Dorsolateral prefrontal cortex (tissue), 120 donors: ENCODE measurements at regions of chr2 and their contacts with region 1.

Region 1: DNA sequence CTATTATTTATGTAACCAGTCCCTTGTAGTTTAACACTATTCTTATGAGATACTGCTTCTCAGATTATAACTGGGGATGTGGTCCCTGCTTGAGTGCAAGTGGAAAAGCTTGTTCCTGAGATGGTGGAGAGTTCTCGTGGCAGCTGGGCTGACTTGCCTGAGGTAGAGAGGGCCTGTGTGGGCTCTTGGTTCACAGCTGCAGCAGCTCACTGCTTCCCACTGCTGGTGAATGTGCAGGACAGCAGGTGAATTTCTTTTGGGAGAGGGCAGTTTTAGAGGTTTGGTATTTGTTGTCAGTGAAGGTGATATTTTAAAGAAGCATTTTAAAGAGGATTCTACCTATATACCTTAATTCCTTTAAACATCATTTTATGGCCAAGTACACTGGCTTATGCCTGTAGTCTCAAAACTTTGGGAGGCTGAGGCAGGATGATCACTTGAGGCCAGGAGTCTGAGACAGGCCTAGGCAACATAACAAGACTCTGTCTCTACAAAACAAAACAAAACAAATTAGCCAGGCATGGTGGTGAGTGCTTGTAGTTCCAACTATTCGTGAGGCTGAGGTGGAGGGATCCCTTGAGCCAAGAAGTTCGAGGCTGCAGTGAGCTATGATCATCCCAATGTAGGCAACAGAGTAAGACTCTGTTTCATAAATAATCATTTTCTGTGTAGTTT is 94.8 kb downstream of the MTA3 start:
- DNase-seq: peak; percentile 25 to 75 (median 64)
- H3K4me3 ChIP-seq: no peak overlapping the region
- H3K27ac ChIP-seq: peak overlapping the region in 7 of 59 donors; percentile 12 to 52 (median 14)
- H3K27me3 ChIP-seq: no peaks in the 10 kb centered on the region
- CTCF ChIP-seq: peak; percentile 77 to 98 (median 94)

Region 2: DNA sequence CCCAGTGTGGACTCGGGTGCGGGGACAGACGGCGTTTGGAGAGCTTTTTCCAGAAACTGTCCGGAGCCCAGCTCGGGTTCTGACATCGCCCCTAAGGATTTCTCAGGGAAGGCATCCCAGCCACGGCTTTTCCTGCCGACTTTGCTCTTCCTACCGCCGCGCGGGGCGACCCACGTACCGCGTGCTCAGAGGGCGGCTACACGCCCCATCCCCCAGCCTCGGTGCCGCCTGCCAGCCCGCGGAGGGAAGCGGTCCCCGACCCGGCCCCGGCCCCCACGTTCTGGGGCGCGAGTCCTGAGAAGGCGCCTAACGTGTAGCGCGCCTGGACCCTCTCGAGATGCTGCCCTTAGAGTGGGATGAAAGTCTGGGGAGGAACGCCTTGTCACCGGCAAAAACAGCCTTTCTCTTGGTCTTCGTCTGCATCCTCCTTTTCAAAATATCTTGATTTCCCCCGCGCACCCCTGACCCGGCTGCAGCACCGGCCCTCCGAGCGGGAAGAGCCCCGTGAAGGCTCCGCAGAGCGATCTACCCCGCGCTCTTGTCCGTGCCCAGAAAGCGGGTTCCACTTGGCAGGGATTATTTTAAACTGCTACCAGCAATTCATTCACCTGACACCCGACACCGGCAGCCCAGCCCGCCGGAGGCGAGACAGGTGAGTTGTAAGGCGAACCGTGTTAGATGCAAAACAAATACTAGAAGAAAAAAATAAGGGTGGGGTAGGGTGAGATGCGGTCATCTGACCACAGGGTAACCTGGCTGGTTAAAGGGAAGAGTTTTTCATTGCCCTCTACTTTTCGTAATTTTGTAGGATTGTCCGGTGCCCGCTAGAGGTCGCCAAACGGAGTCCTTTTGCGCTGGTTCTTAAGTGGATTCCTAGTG is 168.6 kb before region 1 on chr2:
- intact Hi-C with region 1: loop called (anchors 2 to 5 kb)
- DNase-seq: peak; percentile 46 to 77 (median 68)
- H3K4me3 ChIP-seq: peak overlapping the region; percentile 44 to 85 (median 65)
- H3K27ac ChIP-seq: peak overlapping the region in 40 of 59 donors; percentile 8 to 75 (median 48)
- H3K27me3 ChIP-seq: peaks cover 0 to 35% (median 11%) of the 10 kb centered on the region in 45 donors
- CTCF ChIP-seq: peak; percentile 66 to 94 (median 85)

Region 3: GRCh38 chr2:42513257-42513918 is 149.9 kb before region 1 on chr2:
- intact Hi-C with region 1: loop called in 1 of 2 experiments (anchors 5 kb)
- DNase-seq: no peak
- H3K4me3 ChIP-seq: no peak overlapping the region
- H3K27ac ChIP-seq: no peak overlapping the region
- H3K27me3 ChIP-seq: no peaks in the 10 kb centered on the region
- CTCF ChIP-seq: peak in 55 of 56 donors; percentile 4 to 69 (median 53)